ENCODE measurements at regions of chr16 and their contacts with region 1.

Region 1: DNA sequence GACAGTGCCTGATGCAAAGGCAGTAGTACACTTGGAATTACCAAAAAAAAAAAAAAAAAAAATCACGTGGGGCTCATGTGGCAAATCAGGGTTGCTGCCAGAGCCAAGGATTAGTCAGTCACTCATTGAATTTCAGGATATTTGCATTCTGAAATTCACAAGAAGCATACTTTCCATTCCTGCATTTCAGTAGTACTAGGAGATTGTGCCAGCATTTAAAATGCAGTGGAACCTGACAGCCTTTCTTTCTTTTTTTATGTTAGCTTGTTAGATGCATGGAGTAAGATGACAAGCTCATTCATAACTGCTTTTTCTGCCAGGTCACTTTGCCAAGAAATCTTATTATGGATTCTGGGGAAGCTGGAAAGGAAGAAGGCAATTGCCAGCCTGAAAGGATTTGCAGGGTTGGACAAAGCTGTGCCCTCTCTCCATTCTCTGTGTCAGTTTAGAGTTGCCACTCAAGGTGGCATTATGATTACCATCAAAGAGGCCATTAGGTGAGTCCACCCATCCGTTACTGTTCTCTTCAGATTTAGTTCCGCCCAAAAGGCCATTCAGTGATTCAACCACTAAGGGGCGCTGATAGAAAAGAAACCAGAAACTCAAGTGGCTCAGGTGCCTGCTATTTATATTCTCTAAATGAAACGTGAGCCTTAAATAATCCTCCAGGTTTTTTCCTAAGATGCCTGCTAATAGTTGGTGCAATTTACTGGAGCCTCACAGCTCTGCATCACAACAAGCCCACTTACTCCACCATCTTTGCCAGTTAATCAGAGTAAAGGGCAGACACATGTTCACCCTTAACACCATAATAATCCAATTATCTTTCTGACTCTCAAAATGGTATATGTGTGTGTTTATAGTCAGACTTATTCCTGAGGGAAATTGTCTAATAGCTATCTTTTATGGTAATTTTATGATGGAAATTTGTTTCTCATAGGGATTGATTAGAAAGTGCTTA is 59.0 kb downstream of the TANGO6 start:
- DNase-seq: peak; percentile 58 to 68
- ATAC-seq: peak; percentile 87 to 91
- H3K4me3 ChIP-seq: no peak overlapping the region
- H3K27ac ChIP-seq: peak overlapping the region in 1 of 2 experiments; percentile 38; a peak in 3 of 6 replicates
- H3K4me1 ChIP-seq: peaks cover 12% of the 10 kb centered on the region
- CTCF ChIP-seq: peak; percentile 96
- EP300 ChIP-seq: no peak
- POLR2A ChIP-seq: no peak
- RAD21 ChIP-seq: peak; percentile 96 to 97

Region 2: GRCh38 chr16:68760671-68761275 is 141.5 kb before region 1 on chr16:
- CTCF ChIA-PET with region 1: no interaction called
- POLR2A ChIA-PET with region 1: no interaction called
- DNase-seq: peak; percentile 48 to 56
- ATAC-seq: peak; percentile 74 to 81
- H3K4me3 ChIP-seq: no peak overlapping the region
- H3K27ac ChIP-seq: peak overlapping the region; percentile 34 to 72; a peak in 5 of 6 replicates
- H3K4me1 ChIP-seq: peaks cover 36% of the 10 kb centered on the region
- CTCF ChIP-seq: no peak
- EP300 ChIP-seq: no peak
- POLR2A ChIP-seq: no peak
- RAD21 ChIP-seq: no peak

Region 3: GRCh38 chr16:68860978-68861892 is 41.1 kb before region 1 on chr16:
- CTCF ChIA-PET with region 1: no interaction called
- POLR2A ChIA-PET with region 1: no interaction called
- DNase-seq: no peak
- ATAC-seq: no peak
- H3K4me3 ChIP-seq: no peak overlapping the region
- H3K27ac ChIP-seq: no peak overlapping the region
- H3K4me1 ChIP-seq: no peaks in the 10 kb centered on the region
- CTCF ChIP-seq: no peak
- EP300 ChIP-seq: no peak
- POLR2A ChIP-seq: no peak
- RAD21 ChIP-seq: no peak

Region 4: GRCh38 chr16:68915589-68915988 is 13.3 kb after region 1 on chr16:
- CTCF ChIA-PET with region 1: interaction called, 28 read pairs
- POLR2A ChIA-PET with region 1: no interaction called
- DNase-seq: no peak
- ATAC-seq: no peak
- H3K4me3 ChIP-seq: no peak overlapping the region
- H3K27ac ChIP-seq: no peak overlapping the region
- H3K4me1 ChIP-seq: no peaks in the 10 kb centered on the region
- CTCF ChIP-seq: no peak
- EP300 ChIP-seq: no peak
- POLR2A ChIP-seq: no peak
- RAD21 ChIP-seq: no peak

Region 5: DNA sequence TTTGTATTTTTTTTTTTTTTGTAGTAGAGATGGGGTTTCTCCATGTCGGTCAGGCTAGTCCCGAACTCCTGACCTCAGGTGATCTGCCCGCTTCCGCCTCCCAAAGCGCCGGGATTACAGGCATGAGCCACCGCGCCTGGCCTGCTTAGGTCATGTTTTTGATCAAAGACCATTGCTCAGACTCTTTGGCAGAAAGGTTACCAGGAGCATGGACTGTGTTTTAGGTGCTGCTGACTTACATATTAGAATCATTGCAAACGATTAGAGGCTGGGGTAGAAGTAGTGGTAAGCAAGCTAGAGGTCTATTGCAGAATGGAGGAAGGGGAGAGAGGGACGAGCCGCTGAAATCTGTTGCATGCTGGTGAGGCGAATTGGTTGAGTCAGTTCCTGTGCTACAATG is 20.8 kb after region 1 on chr16:
- CTCF ChIA-PET with region 1: interaction called, 28 read pairs
- POLR2A ChIA-PET with region 1: no interaction called
- DNase-seq: no peak
- ATAC-seq: no peak
- H3K4me3 ChIP-seq: no peak overlapping the region
- H3K27ac ChIP-seq: peak overlapping the region; percentile 28 to 86; a peak in 4 of 6 replicates
- H3K4me1 ChIP-seq: peaks cover 30% of the 10 kb centered on the region
- CTCF ChIP-seq: no peak
- EP300 ChIP-seq: no peak
- POLR2A ChIP-seq: no peak
- RAD21 ChIP-seq: no peak

Region 6: DNA sequence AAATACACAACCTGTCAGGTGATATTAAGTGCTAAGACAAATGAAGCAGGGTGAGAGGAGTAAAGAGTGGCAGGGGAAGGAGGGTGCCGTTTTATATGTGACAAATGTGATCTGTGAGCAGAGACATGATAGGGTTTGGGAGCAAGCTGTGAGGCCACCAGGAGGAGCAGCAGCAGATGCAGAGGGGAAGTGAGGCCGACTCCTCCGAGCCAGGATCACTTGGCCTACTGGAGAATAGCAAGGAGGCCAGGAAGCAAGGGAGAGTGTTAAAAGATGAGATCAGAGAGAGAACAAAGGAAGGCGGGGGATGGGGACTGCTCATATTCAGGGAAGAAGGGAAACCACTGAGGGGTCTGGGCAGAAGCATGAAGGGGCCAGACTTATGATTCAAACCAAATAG is 70.4 kb after region 1 on chr16:
- CTCF ChIA-PET with region 1: interaction called, 14 read pairs
- POLR2A ChIA-PET with region 1: no interaction called
- DNase-seq: peak; percentile 45 to 71
- ATAC-seq: peak; percentile 95 to 97
- H3K4me3 ChIP-seq: no peak overlapping the region
- H3K27ac ChIP-seq: peak overlapping the region; percentile 12 to 62; a peak in 5 of 6 replicates
- H3K4me1 ChIP-seq: peaks cover 20% of the 10 kb centered on the region
- CTCF ChIP-seq: peak; percentile 34; the same call in 2 of the 3 replicates
- EP300 ChIP-seq: no peak
- POLR2A ChIP-seq: no peak
- RAD21 ChIP-seq: peak; percentile 52 to 64

Region 7: DNA sequence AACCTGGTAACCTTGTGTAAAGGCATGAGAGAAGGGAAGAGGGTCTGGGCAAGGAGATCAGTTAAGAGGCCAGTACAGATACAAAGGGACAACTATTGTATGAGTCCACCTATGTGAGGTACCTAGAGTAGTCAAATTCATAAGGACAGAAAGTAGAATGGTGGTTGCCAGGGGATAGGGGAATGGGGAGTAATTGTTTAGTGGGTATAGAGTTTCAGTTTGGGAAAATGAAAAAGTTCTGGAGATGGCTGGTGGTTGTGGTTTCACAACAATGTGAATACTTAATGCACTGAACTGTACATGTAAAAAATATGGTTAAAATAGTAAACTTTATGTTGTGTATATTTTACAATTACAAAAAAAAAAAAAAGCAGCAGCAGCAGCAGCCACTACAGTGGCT is 334.0 kb after region 1 on chr16:
- CTCF ChIA-PET with region 1: no interaction called
- POLR2A ChIA-PET with region 1: no interaction called
- DNase-seq: no peak
- ATAC-seq: no peak
- H3K4me3 ChIP-seq: no peak overlapping the region
- H3K27ac ChIP-seq: no peak overlapping the region
- H3K4me1 ChIP-seq: no peaks in the 10 kb centered on the region
- CTCF ChIP-seq: no peak
- EP300 ChIP-seq: no peak
- POLR2A ChIP-seq: no peak
- RAD21 ChIP-seq: no peak